Activated CD8-positive, alpha-beta T cell treated with anti-CD3 and anti-CD28 coated beads for 36 hours (primary cell): ENCODE measurements at regions of chr7 and their contacts with region 1.

Region 1: GRCh38 chr7:992709-993607 is 10.0 kb downstream of the CYP2W1 start:
- DNase-seq: peak; percentile 96
- ATAC-seq: peak; percentile 98
- H3K4me3 Mint-ChIP-seq: no peak overlapping the region
- H3K27ac Mint-ChIP-seq: no peak overlapping the region
- H3K4me1 Mint-ChIP-seq: peaks cover 5% of the 10 kb centered on the region
- H3K27me3 Mint-ChIP-seq: no peaks in the 10 kb centered on the region
- CTCF ChIP-seq: peak; percentile 97

Region 2: GRCh38 chr7:471866-472639 is 520.9 kb before region 1 on chr7:
- CTCF ChIA-PET with region 1: no interaction called
- POLR2A ChIA-PET with region 1: no interaction called
- intact Hi-C with region 1: no loop called
- DNase-seq: peak; percentile 18
- ATAC-seq: no peak
- H3K4me3 Mint-ChIP-seq: no peak overlapping the region
- H3K27ac Mint-ChIP-seq: no peak overlapping the region
- H3K4me1 Mint-ChIP-seq: peaks cover 13% of the 10 kb centered on the region
- H3K27me3 Mint-ChIP-seq: no peaks in the 10 kb centered on the region
- CTCF ChIP-seq: no peak

Region 3: DNA sequence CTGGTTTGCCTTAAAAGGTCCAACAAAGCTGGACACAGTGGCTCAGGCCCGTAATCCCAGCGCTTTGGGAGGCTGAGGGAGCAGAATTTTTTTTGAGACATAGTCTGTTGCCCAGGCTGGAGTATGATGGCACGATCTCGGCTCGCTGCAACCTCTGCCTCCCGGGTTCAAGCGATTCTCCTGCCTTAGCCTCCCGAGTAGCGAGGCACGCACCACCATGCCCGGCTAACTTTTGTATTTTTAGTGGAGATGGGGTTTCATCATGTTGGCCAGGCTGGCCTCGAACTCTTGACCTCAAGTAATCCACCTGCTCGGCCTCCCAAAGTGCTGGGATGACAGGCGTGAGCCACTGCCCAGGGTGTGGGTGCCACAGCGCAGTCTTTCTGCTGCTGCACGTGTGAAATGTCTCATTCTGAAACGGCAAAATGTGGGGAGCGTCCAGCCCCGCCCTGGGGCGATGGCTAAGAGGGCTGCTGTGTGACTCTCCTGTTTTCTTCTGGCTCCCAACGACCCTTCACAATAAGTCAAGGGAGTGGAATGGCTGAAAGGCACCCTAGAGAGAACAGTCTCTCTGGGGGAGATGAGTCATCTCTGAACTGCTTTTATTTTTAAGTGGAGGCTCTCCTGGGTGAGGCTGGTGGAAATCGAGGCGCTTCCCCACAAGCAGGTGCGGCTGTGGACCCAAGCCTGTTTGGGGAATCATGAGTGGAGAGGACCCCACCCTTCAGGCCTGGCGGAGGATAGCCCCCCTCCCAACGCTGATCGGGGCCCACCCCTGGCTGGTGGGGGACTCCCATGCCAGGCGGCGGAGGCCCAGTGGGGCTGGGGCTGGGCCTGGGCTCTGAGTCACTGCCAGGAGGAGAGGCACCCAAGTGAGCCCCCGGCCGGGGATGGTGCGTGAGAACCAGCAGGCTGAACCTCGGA is 56.6 kb before region 1 on chr7:
- CTCF ChIA-PET with region 1: no interaction called
- POLR2A ChIA-PET with region 1: no interaction called
- intact Hi-C with region 1: no loop called
- DNase-seq: peak; percentile 74
- ATAC-seq: peak; percentile 78
- H3K4me3 Mint-ChIP-seq: peak overlapping the region; percentile 27
- H3K27ac Mint-ChIP-seq: peak overlapping the region; percentile 86
- H3K4me1 Mint-ChIP-seq: peaks cover 44% of the 10 kb centered on the region
- H3K27me3 Mint-ChIP-seq: no peaks in the 10 kb centered on the region
- CTCF ChIP-seq: no peak

Region 4: GRCh38 chr7:974820-975681 is 17.9 kb before region 1 on chr7 and contains the start of gene COX19:
- CTCF ChIA-PET with region 1: interaction called, 67 read pairs
- POLR2A ChIA-PET with region 1: interaction called, 19 read pairs
- intact Hi-C with region 1: no loop called
- DNase-seq: peak; percentile 91
- ATAC-seq: peak; percentile 92
- H3K4me3 Mint-ChIP-seq: peak within 1 kb of the TSS; percentile 96
- H3K27ac Mint-ChIP-seq: peak within 1 kb of the TSS; percentile 93
- H3K4me1 Mint-ChIP-seq: peaks cover 26% of the 10 kb centered on the region
- H3K27me3 Mint-ChIP-seq: no peaks in the 10 kb centered on the region
- CTCF ChIP-seq: no peak
- total RNA-seq, gene COX19: 15.5 to 18.0 TPM

Region 5: GRCh38 chr7:1044191-1045068 is 51.5 kb after region 1 on chr7 and contains the start of gene GPR146:
- CTCF ChIA-PET with region 1: interaction called, 28 read pairs
- POLR2A ChIA-PET with region 1: no interaction called
- intact Hi-C with region 1: loop called (anchors 10 kb)
- DNase-seq: peak; percentile 93
- ATAC-seq: peak; percentile 89
- H3K4me3 Mint-ChIP-seq: peak within 1 kb of the TSS; percentile 79
- H3K27ac Mint-ChIP-seq: peak within 1 kb of the TSS; percentile 75
- H3K4me1 Mint-ChIP-seq: peaks cover 58% of the 10 kb centered on the region
- H3K27me3 Mint-ChIP-seq: no peaks in the 10 kb centered on the region
- CTCF ChIP-seq: peak; percentile 63
- total RNA-seq, gene GPR146: 5.6 to 8.5 TPM

Region 6: DNA sequence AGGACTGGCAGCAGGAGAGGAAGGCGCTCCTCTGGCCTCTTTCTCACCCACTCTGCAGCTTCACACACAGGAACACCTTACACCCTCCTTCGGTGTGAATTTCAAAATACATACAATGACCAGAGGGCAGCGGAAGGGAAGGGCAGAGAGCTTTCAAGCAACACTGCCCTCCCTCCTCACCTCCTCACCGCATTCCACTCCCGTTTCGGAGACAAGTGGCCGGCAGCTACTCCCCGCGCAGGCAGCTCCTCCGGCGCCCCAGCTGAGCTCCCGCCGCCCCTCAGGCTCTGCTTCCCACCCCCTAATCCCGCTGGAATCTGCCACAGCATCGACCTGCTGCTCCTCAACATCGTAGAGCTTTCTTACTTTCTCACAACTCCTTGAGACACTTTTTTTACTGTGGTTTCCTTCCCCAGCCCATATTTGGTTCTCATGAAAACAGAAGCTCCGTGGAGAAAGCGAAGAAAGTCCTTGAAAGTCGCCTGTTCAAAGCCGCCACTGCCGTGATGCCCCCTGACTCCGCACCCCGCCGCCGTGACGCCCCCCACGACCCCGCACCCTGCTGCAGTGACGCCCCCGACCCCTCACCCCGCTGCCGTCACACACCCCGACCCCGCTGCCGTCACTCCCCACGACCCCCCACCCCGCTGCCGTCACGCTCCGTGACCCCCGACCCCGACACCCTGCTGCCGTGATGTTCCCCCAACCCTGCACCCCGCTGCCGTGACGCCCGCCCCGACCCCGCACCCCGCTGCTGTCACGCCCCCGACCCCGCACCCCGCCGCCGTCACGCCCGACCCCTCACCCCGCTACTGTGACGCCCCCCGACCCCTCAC is 80.4 kb after region 1 on chr7:
- CTCF ChIA-PET with region 1: interaction called, 17 read pairs
- POLR2A ChIA-PET with region 1: no interaction called
- intact Hi-C with region 1: loop called (anchors 5 kb)
- DNase-seq: no peak
- ATAC-seq: no peak
- H3K4me3 Mint-ChIP-seq: no peak overlapping the region
- H3K27ac Mint-ChIP-seq: no peak overlapping the region
- H3K4me1 Mint-ChIP-seq: no peaks in the 10 kb centered on the region
- H3K27me3 Mint-ChIP-seq: no peaks in the 10 kb centered on the region
- CTCF ChIP-seq: no peak

Region 7: GRCh38 chr7:1144269-1144771 is 151.4 kb after region 1 on chr7:
- CTCF ChIA-PET with region 1: interaction called, 12 read pairs
- POLR2A ChIA-PET with region 1: no interaction called
- intact Hi-C with region 1: no loop called
- DNase-seq: no peak
- ATAC-seq: no peak
- H3K4me3 Mint-ChIP-seq: no peak overlapping the region
- H3K27ac Mint-ChIP-seq: no peak overlapping the region
- H3K4me1 Mint-ChIP-seq: peaks cover 5% of the 10 kb centered on the region
- H3K27me3 Mint-ChIP-seq: no peaks in the 10 kb centered on the region
- CTCF ChIP-seq: no peak

Region 8: GRCh38 chr7:1193593-1194424 is 200.9 kb after region 1 on chr7:
- CTCF ChIA-PET with region 1: interaction called, 16 read pairs
- POLR2A ChIA-PET with region 1: no interaction called
- intact Hi-C with region 1: no loop called
- DNase-seq: peak; percentile 62
- ATAC-seq: peak; percentile 54
- H3K4me3 Mint-ChIP-seq: no peak overlapping the region
- H3K27ac Mint-ChIP-seq: no peak overlapping the region
- H3K4me1 Mint-ChIP-seq: peaks cover 10% of the 10 kb centered on the region
- H3K27me3 Mint-ChIP-seq: peaks cover 16% of the 10 kb centered on the region
- CTCF ChIP-seq: peak; percentile 23